ENCODE measurements at regions of chr13 and their contacts with region 1.

Region 1: GRCh38 chr13:76473552-76474134 is 412.6 kb downstream of the KCTD12 start:
- DNase-seq: peak; percentile 40 to 85 (median 60)
- ATAC-seq: peak; percentile 95
- H3K4me3 ChIP-seq: no peak overlapping the region
- H3K4me3 Mint-ChIP-seq: no peak overlapping the region
- H3K27ac ChIP-seq: no peak overlapping the region
- H3K27ac Mint-ChIP-seq: no peak overlapping the region
- H3K4me1 ChIP-seq: no peaks in the 10 kb centered on the region
- H3K4me1 Mint-ChIP-seq: no peaks in the 10 kb centered on the region
- H3K27me3 ChIP-seq: no peaks in the 10 kb centered on the region
- H3K27me3 Mint-ChIP-seq: peaks cover 14% of the 10 kb centered on the region
- CTCF ChIP-seq: peak; percentile 89

Region 2: GRCh38 chr13:75372517-75372916 is 1101.1 kb before region 1 on chr13:
- CTCF ChIA-PET with region 1: no interaction called
- POLR2A ChIA-PET with region 1: no interaction called
- intact Hi-C with region 1: loop called (anchors 5 kb)
- DNase-seq: peak in 3 of 14 experiments; percentile 53 to 63 (median 58)
- ATAC-seq: peak; percentile 85
- H3K4me3 ChIP-seq: no peak overlapping the region
- H3K4me3 Mint-ChIP-seq: no peak overlapping the region
- H3K27ac ChIP-seq: no peak overlapping the region
- H3K27ac Mint-ChIP-seq: no peak overlapping the region
- H3K4me1 ChIP-seq: no peaks in the 10 kb centered on the region
- H3K4me1 Mint-ChIP-seq: no peaks in the 10 kb centered on the region
- H3K27me3 ChIP-seq: no peaks in the 10 kb centered on the region
- H3K27me3 Mint-ChIP-seq: no peaks in the 10 kb centered on the region
- CTCF ChIP-seq: peak; percentile 84

Region 3: GRCh38 chr13:75675421-75675820 is 798.2 kb before region 1 on chr13:
- CTCF ChIA-PET with region 1: interaction called, 3 read pairs
- POLR2A ChIA-PET with region 1: no interaction called
- intact Hi-C with region 1: loop called in 1 of 2 experiments (anchors 1 kb)
- DNase-seq: no peak
- ATAC-seq: no peak
- H3K4me3 ChIP-seq: no peak overlapping the region
- H3K4me3 Mint-ChIP-seq: no peak overlapping the region
- H3K27ac ChIP-seq: no peak overlapping the region
- H3K27ac Mint-ChIP-seq: no peak overlapping the region
- H3K4me1 ChIP-seq: no peaks in the 10 kb centered on the region
- H3K4me1 Mint-ChIP-seq: no peaks in the 10 kb centered on the region
- H3K27me3 ChIP-seq: no peaks in the 10 kb centered on the region
- H3K27me3 Mint-ChIP-seq: no peaks in the 10 kb centered on the region
- CTCF ChIP-seq: no peak

Region 4: DNA sequence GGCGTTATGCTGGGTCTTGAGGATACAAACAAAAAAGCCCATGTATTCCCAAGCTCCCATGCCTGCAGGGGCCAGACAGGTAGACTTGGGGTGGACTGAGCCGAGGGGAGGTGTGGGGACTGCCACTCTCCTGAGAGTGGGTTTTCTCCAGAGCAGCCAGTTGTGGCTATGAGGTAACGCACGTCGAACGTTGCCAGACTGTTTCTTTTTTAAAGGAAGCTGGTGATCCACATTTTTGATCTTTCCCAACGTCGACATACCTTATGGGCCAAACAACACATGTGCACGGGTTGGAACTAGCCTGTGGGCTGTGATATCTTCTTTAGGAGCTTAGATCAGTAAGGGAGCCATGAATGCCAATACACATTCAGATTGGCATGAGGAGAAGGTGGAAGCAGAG is 776.9 kb before region 1 on chr13:
- CTCF ChIA-PET with region 1: interaction called, 5 read pairs
- POLR2A ChIA-PET with region 1: no interaction called
- intact Hi-C with region 1: loop called (anchors 1 to 2 kb)
- DNase-seq: no peak
- ATAC-seq: no peak
- H3K4me3 ChIP-seq: no peak overlapping the region
- H3K4me3 Mint-ChIP-seq: no peak overlapping the region
- H3K27ac ChIP-seq: no peak overlapping the region
- H3K27ac Mint-ChIP-seq: no peak overlapping the region
- H3K4me1 ChIP-seq: no peaks in the 10 kb centered on the region
- H3K4me1 Mint-ChIP-seq: no peaks in the 10 kb centered on the region
- H3K27me3 ChIP-seq: no peaks in the 10 kb centered on the region
- H3K27me3 Mint-ChIP-seq: no peaks in the 10 kb centered on the region
- CTCF ChIP-seq: no peak

Region 5: DNA sequence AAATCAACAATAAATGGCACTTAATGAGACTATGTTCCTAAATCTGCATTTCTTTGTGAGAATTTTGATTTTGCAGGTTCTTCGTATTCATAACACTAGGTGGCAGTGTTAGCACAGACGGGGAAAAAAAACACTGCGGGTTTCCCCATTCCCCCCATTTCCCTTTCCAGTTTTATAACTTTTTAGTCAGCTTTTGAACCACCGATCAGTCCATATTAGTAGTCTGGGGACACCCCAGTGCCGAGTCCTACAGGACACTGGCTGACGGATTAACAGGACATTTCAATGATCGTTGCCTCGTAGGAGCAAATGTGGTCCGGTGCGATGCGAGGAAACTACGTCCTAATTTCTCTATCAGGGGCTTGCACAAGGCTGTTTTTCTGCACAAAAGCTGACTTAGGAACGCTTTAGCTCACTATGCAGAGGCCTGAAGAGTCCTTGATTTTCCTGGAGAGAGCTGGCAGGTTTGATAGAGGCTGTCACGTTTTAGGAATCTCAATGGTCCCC is 603.2 kb before region 1 on chr13:
- CTCF ChIA-PET with region 1: interaction called, 3 read pairs
- POLR2A ChIA-PET with region 1: no interaction called
- intact Hi-C with region 1: loop called in 1 of 2 experiments (anchors 2 kb)
- DNase-seq: peak in 7 of 14 experiments; percentile 2 to 63 (median 39)
- ATAC-seq: peak; percentile 64
- H3K4me3 ChIP-seq: peak overlapping the region; percentile 44
- H3K4me3 Mint-ChIP-seq: peak overlapping the region; percentile 79
- H3K27ac ChIP-seq: peak overlapping the region; percentile 34 to 50
- H3K27ac Mint-ChIP-seq: peak overlapping the region; percentile 80
- H3K4me1 ChIP-seq: peaks cover 7% of the 10 kb centered on the region
- H3K4me1 Mint-ChIP-seq: peaks cover 17% of the 10 kb centered on the region
- H3K27me3 ChIP-seq: peaks cover 0 to 4% of the 10 kb centered on the region in 2 experiments
- H3K27me3 Mint-ChIP-seq: peaks cover 4% of the 10 kb centered on the region
- CTCF ChIP-seq: peak; percentile 86

Region 6: GRCh38 chr13:75876360-75877050 is 597.1 kb before region 1 on chr13:
- CTCF ChIA-PET with region 1: no interaction called
- POLR2A ChIA-PET with region 1: no interaction called
- intact Hi-C with region 1: loop called (anchors 2 kb)
- DNase-seq: peak; percentile 13 to 76 (median 32)
- ATAC-seq: peak; percentile 93
- H3K4me3 ChIP-seq: no peak overlapping the region
- H3K4me3 Mint-ChIP-seq: peak overlapping the region; percentile 52
- H3K27ac ChIP-seq: no peak overlapping the region
- H3K27ac Mint-ChIP-seq: no peak overlapping the region
- H3K4me1 ChIP-seq: peaks cover 10% of the 10 kb centered on the region
- H3K4me1 Mint-ChIP-seq: peaks cover 15% of the 10 kb centered on the region
- H3K27me3 ChIP-seq: no peaks in the 10 kb centered on the region
- H3K27me3 Mint-ChIP-seq: peaks cover 4% of the 10 kb centered on the region
- CTCF ChIP-seq: peak; percentile 89

Region 7: GRCh38 chr13:76937281-76937820 is 463.7 kb after region 1 on chr13:
- CTCF ChIA-PET with region 1: no interaction called
- POLR2A ChIA-PET with region 1: no interaction called
- intact Hi-C with region 1: no loop called
- DNase-seq: peak in 2 of 14 experiments; percentile 43 to 62
- ATAC-seq: no peak
- H3K4me3 ChIP-seq: no peak overlapping the region
- H3K4me3 Mint-ChIP-seq: no peak overlapping the region
- H3K27ac ChIP-seq: no peak overlapping the region
- H3K27ac Mint-ChIP-seq: no peak overlapping the region
- H3K4me1 ChIP-seq: no peaks in the 10 kb centered on the region
- H3K4me1 Mint-ChIP-seq: no peaks in the 10 kb centered on the region
- H3K27me3 ChIP-seq: no peaks in the 10 kb centered on the region
- H3K27me3 Mint-ChIP-seq: no peaks in the 10 kb centered on the region
- CTCF ChIP-seq: no peak

Measured in CD4-positive, alpha-beta T cell (primary cell).